MCF 10A (cell line): ENCODE measurements at regions of chr10 and their contacts with region 1.

Region 1: GRCh38 chr10:101214446-101215396 is 14.5 kb downstream of the LBX1 start:
- DNase-seq: peak; percentile 68
- H3K4me3 Mint-ChIP-seq: peak overlapping the region; percentile 75
- H3K27ac Mint-ChIP-seq: no peak overlapping the region
- H3K4me1 Mint-ChIP-seq: peaks cover 4% of the 10 kb centered on the region
- H3K27me3 Mint-ChIP-seq: peaks cover 49% of the 10 kb centered on the region
- CTCF ChIP-seq: peak; percentile 95

Region 2: DNA sequence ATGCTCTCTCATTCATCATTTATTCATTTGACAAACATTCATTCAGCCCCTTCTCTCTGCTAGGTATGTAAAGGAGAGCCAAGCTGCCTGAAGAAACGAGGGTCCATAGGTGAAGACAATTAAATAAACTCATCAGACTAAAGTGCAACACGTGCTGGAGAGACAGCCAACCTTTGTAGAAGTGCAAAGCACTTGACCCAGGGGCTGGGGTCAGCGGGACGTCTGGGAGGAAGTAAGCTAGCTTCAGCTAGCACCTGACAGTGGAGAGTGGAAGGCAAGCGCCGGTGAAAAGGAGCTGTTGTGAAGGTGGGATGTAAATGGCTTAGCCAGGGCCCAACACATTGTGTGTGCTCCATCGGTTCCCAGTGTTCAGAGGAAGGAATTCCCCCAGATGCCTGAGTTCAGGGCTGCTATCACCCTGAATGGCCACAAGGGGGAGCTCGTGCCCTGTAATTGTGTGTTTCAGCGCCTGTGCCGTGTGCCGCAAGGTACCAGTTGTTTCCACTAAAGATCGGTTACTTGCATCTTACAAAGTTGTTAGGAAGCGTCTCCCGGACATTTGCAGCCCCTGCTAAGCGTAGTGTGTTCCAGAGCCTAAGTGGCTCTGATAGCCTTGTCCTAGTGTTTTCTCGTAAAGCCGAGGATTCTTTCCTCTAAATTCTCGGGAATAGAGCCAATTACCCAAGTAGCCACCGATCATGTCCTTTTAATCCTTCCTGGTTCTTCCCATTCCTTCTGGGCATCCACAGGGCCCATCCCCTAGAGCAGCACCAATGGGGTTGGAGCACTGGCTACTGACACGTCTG is 53.0 kb before region 1 on chr10:
- CTCF ChIA-PET with region 1: interaction called, 16 read pairs
- POLR2A ChIA-PET with region 1: interaction called, 4 read pairs
- intact Hi-C with region 1: loop called (anchors 1 kb)
- DNase-seq: peak; percentile 83
- H3K4me3 Mint-ChIP-seq: peak overlapping the region; percentile 63
- H3K27ac Mint-ChIP-seq: no peak overlapping the region
- H3K4me1 Mint-ChIP-seq: peaks cover 19% of the 10 kb centered on the region
- H3K27me3 Mint-ChIP-seq: peaks cover 33% of the 10 kb centered on the region
- CTCF ChIP-seq: peak; percentile 91

Region 3: GRCh38 chr10:101291331-101292193 is 76.8 kb after region 1 on chr10:
- CTCF ChIA-PET with region 1: interaction called, 58 read pairs
- POLR2A ChIA-PET with region 1: no interaction called
- intact Hi-C with region 1: loop called (anchors 1 kb)
- DNase-seq: peak; percentile 34
- H3K4me3 Mint-ChIP-seq: peak overlapping the region; percentile 71
- H3K27ac Mint-ChIP-seq: no peak overlapping the region
- H3K4me1 Mint-ChIP-seq: peaks cover 7% of the 10 kb centered on the region
- H3K27me3 Mint-ChIP-seq: peaks cover 39% of the 10 kb centered on the region
- CTCF ChIP-seq: peak; percentile 69

Region 4: GRCh38 chr10:101441541-101442455 is 227.1 kb after region 1 on chr10:
- CTCF ChIA-PET with region 1: interaction called, 183 read pairs
- POLR2A ChIA-PET with region 1: interaction called, 4 read pairs
- intact Hi-C with region 1: loop called (anchors 1 kb)
- DNase-seq: peak; percentile 75
- H3K4me3 Mint-ChIP-seq: no peak overlapping the region
- H3K27ac Mint-ChIP-seq: no peak overlapping the region
- H3K4me1 Mint-ChIP-seq: peaks cover 6% of the 10 kb centered on the region
- H3K27me3 Mint-ChIP-seq: no peaks in the 10 kb centered on the region
- CTCF ChIP-seq: peak; percentile 66

Region 5: DNA sequence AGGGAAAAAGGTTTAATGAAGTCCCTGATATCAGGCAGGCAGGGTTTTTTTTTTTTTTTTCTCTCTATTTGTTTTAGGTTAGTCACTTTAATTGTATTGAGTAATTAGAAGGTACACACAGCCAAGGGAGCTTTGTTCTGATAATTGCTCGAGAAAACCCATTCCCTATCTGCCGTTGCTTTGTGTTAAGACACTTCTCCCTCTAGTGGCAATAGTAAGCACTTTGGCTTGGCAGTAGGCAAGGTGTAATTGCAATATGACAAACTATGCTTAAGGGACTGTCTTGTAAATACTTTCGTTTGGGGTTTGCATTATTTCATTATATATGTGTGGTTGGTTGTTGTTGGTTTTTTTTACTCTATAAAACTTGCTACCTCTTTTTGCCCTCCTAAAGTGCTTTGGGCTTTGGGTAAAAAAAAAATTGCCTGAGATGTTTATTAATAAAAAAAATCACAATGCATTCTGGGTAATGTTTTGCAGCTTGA is 252.6 kb after region 1 on chr10:
- CTCF ChIA-PET with region 1: interaction called, 96 read pairs
- POLR2A ChIA-PET with region 1: interaction called, 5 read pairs
- intact Hi-C with region 1: loop called (anchors 1 kb)
- DNase-seq: peak; percentile 83
- H3K4me3 Mint-ChIP-seq: no peak overlapping the region
- H3K27ac Mint-ChIP-seq: no peak overlapping the region
- H3K4me1 Mint-ChIP-seq: no peaks in the 10 kb centered on the region
- H3K27me3 Mint-ChIP-seq: no peaks in the 10 kb centered on the region
- CTCF ChIP-seq: peak; percentile 72

Region 6: GRCh38 chr10:101576211-101576863 is 361.6 kb after region 1 on chr10:
- CTCF ChIA-PET with region 1: interaction called, 118 read pairs
- POLR2A ChIA-PET with region 1: interaction called, 15 read pairs
- intact Hi-C with region 1: no loop called
- DNase-seq: no peak
- H3K4me3 Mint-ChIP-seq: no peak overlapping the region
- H3K27ac Mint-ChIP-seq: no peak overlapping the region
- H3K4me1 Mint-ChIP-seq: no peaks in the 10 kb centered on the region
- H3K27me3 Mint-ChIP-seq: no peaks in the 10 kb centered on the region
- CTCF ChIP-seq: no peak